ENCODE measurements at regions of chr9 and their contacts with region 1.

Region 1: GRCh38 chr9:134163353-134164196 is 789 bp downstream of the RNU6ATAC start:
- DNase-seq: peak; percentile 62 to 86
- ATAC-seq: peak; percentile 9 to 16 (median 12)
- H3K4me3 ChIP-seq: no peak overlapping the region
- H3K4me3 Mint-ChIP-seq: no peak overlapping the region
- H3K27ac ChIP-seq: no peak overlapping the region
- H3K27ac Mint-ChIP-seq: no peak overlapping the region
- H3K4me1 ChIP-seq: peaks cover 13% of the 10 kb centered on the region
- H3K4me1 Mint-ChIP-seq: peaks cover 5 to 15% of the 10 kb centered on the region in 2 donors
- H3K27me3 ChIP-seq: no peaks in the 10 kb centered on the region
- H3K27me3 Mint-ChIP-seq: no peaks in the 10 kb centered on the region
- CTCF ChIP-seq: peak; percentile 52

Region 2: DNA sequence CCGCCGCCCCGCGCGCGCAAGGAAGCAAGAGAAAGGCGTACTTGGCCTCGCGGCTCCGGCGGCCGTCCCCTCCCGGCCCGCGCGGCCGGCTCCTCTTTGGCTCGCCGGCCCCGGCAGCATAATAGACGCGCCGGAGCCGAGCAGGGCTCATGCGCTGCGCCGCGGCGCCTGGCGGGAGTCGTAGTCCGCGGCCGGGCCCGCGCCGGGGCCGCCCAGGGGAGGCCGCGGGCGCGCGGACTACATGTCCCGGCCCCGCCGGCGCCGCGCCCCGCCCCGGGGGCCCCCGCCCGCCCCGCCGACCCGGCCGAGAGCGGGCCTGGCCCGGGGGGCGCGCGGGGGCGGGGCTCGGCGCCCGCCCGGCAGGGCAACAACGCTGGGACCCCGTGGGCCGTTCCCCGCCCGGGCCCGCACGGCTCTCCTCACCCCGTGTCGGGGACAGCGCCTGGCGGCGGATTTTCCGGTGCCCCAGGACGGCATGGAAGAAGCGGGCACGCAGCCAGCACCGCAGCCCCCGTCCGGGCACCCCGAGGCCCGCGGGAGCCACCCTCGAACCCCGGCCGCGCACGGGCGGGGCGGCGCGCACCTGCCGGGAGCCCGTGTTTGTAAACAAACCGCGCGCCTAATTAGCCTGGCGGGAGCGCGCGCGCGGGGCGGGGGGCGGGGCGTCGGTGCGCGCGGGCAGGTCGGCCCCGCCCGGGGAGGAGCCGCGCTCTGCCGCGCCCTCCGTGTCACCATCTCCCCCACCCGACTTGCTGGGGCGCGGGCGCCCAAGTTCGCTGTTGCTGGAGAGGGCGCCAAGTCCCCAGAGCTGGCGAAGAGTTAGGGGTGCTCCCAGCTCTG is 95.5 kb before region 1 on chr9 and contains the start of gene BRD3:
- intact Hi-C with region 1: loop called (anchors 1 kb)
- DNase-seq: peak; percentile 80 to 95
- ATAC-seq: peak; percentile 76 to 92 (median 84)
- H3K4me3 ChIP-seq: peak within 1 kb of the TSS; percentile 64
- H3K4me3 Mint-ChIP-seq: peak within 1 kb of the TSS; percentile 94
- H3K27ac ChIP-seq: peak within 1 kb of the TSS; percentile 84
- H3K27ac Mint-ChIP-seq: peak within 1 kb of the TSS; percentile 92 to 94
- H3K4me1 ChIP-seq: peaks cover 46% of the 10 kb centered on the region
- H3K4me1 Mint-ChIP-seq: peaks cover 13 to 25% of the 10 kb centered on the region in 2 donors
- H3K27me3 ChIP-seq: peaks cover 5% of the 10 kb centered on the region
- H3K27me3 Mint-ChIP-seq: peaks cover 8 to 9% of the 10 kb centered on the region in 2 donors
- CTCF ChIP-seq: no peak
- total RNA-seq, gene BRD3: 52.8 to 63.0 (median 52.8) TPM

Region 3: DNA sequence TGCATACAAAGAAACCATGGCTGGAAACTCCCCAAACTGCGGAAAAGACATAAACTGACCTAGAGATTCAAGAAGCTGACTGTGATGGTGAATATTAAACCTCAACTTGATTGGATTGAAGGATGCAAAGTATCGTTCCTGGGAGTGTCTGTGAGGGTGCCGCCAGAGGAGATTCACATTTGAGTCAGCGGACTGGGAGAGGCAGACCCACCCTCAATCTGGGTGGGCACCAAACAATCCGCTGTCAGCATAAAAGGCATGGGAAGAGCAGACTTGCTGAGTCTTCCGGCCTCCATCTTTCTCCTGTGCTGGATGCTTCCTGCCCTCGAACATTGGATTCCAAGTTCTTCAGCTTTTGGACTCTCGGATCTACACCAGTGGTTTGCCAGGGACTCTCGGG is 52.5 kb before region 1 on chr9:
- intact Hi-C with region 1: no loop called
- DNase-seq: no peak
- ATAC-seq: no peak
- H3K4me3 ChIP-seq: no peak overlapping the region
- H3K4me3 Mint-ChIP-seq: no peak overlapping the region
- H3K27ac ChIP-seq: no peak overlapping the region
- H3K27ac Mint-ChIP-seq: no peak overlapping the region
- H3K4me1 ChIP-seq: no peaks in the 10 kb centered on the region
- H3K4me1 Mint-ChIP-seq: no peaks in the 10 kb centered on the region
- H3K27me3 ChIP-seq: no peaks in the 10 kb centered on the region
- H3K27me3 Mint-ChIP-seq: peaks cover 0 to 5% of the 10 kb centered on the region in 2 donors
- CTCF ChIP-seq: no peak

Region 4: DNA sequence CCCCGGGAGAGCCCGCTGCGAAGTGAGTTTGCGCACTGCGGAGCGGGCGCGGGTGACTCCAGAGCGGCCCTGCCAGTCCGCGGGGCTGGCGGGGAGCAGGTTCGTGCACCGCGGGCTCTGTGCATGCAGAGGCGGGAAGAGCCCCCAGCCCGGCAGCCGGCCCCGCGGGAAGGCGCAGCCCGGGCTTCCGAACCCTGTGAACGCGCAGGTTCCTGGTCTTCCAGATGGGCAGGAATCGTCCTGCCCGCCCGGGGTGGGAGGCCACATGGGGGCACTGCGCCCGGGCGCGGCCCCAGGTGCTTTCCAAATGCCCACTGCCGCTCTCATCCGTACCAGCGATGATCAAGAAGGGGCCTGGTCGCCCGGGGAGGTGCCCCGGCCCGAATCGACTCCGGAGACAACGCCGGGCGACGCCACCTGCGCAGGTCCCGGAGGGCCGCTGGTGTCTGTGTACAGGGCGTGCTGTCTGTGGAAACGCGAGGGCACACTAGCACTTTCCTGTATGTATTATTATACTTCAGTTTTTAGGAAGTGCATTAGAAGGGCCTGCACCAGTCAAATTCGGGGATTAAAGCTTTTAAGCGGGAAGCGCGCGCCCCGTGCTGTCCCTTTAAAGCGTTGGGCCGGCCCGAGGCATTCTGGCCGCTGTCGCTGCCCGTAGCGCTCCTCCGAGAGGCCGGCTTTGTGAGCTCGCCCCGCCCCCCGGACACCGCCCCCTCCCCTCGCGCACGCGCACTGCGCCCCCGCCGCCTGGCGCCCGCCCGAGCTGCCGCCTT is 28.0 kb before region 1 on chr9 and contains the start of gene WDR5:
- intact Hi-C with region 1: loop called (anchors 1 kb)
- DNase-seq: peak; percentile 89 to 95
- ATAC-seq: peak; percentile 91 to 96 (median 93)
- H3K4me3 ChIP-seq: peak within 1 kb of the TSS; percentile 75
- H3K4me3 Mint-ChIP-seq: peak within 1 kb of the TSS; percentile 93
- H3K27ac ChIP-seq: peak within 1 kb of the TSS; percentile 44
- H3K27ac Mint-ChIP-seq: peak within 1 kb of the TSS; percentile 75 to 89
- H3K4me1 ChIP-seq: peaks cover 34% of the 10 kb centered on the region
- H3K4me1 Mint-ChIP-seq: peaks cover 31 to 52% of the 10 kb centered on the region in 2 donors
- H3K27me3 ChIP-seq: no peaks in the 10 kb centered on the region
- H3K27me3 Mint-ChIP-seq: no peaks in the 10 kb centered on the region
- CTCF ChIP-seq: peak; percentile 24
- total RNA-seq, gene WDR5: 12.9 to 18.6 (median 15.9) TPM

Region 5: GRCh38 chr9:134325817-134326723 is 162.5 kb after region 1 on chr9 and contains the start of gene RXRA:
- intact Hi-C with region 1: loop called (anchors 10 kb)
- DNase-seq: peak; percentile 53 to 86
- ATAC-seq: peak; percentile 68 to 79 (median 75)
- H3K4me3 ChIP-seq: peak within 1 kb of the TSS; percentile 46
- H3K4me3 Mint-ChIP-seq: peak within 1 kb of the TSS; percentile 86
- H3K27ac ChIP-seq: no peak within 1 kb of the TSS
- H3K27ac Mint-ChIP-seq: peak within 1 kb of the TSS in 1 of 2 donors; percentile 87
- H3K4me1 ChIP-seq: peaks cover 40% of the 10 kb centered on the region
- H3K4me1 Mint-ChIP-seq: peaks cover 0 to 33% of the 10 kb centered on the region in 2 donors
- H3K27me3 ChIP-seq: peaks cover 10% of the 10 kb centered on the region
- H3K27me3 Mint-ChIP-seq: no peaks in the 10 kb centered on the region
- CTCF ChIP-seq: no peak
- total RNA-seq, gene RXRA: 30.9 to 64.1 (median 42.2) TPM

Region 6: GRCh38 chr9:134403682-134404301 is 240.2 kb after region 1 on chr9:
- intact Hi-C with region 1: no loop called
- DNase-seq: peak; percentile 58 to 75
- ATAC-seq: peak; percentile 35 to 60 (median 36)
- H3K4me3 ChIP-seq: no peak overlapping the region
- H3K4me3 Mint-ChIP-seq: peak overlapping the region; percentile 76
- H3K27ac ChIP-seq: peak overlapping the region; percentile 59
- H3K27ac Mint-ChIP-seq: peak overlapping the region; percentile 60 to 87
- H3K4me1 ChIP-seq: peaks cover 73% of the 10 kb centered on the region
- H3K4me1 Mint-ChIP-seq: peaks cover 46 to 63% of the 10 kb centered on the region in 2 donors
- H3K27me3 ChIP-seq: no peaks in the 10 kb centered on the region
- H3K27me3 Mint-ChIP-seq: no peaks in the 10 kb centered on the region
- CTCF ChIP-seq: no peak

Region 7: GRCh38 chr9:135253305-135254004 is 1089.9 kb after region 1 on chr9:
- intact Hi-C with region 1: no loop called
- DNase-seq: no peak
- ATAC-seq: no peak
- H3K4me3 ChIP-seq: no peak overlapping the region
- H3K4me3 Mint-ChIP-seq: no peak overlapping the region
- H3K27ac ChIP-seq: no peak overlapping the region
- H3K27ac Mint-ChIP-seq: no peak overlapping the region
- H3K4me1 ChIP-seq: no peaks in the 10 kb centered on the region
- H3K4me1 Mint-ChIP-seq: no peaks in the 10 kb centered on the region
- H3K27me3 ChIP-seq: no peaks in the 10 kb centered on the region
- H3K27me3 Mint-ChIP-seq: peaks cover 0 to 3% of the 10 kb centered on the region in 2 donors
- CTCF ChIP-seq: no peak